ENCODE measurements at regions of chr15 and their contacts with region 1.

Region 1: GRCh38 chr15:95129574-95129973 is 898.2 kb downstream of the MCTP2 start:
- DNase-seq: peak; percentile 16
- H3K4me3 ChIP-seq: no peak overlapping the region
- H3K27ac ChIP-seq: no peak overlapping the region
- H3K4me1 ChIP-seq: peaks cover 28% of the 10 kb centered on the region
- H3K27me3 ChIP-seq: no peaks in the 10 kb centered on the region
- CTCF ChIP-seq: no peak
- POLR2A ChIP-seq: no peak

Region 2: DNA sequence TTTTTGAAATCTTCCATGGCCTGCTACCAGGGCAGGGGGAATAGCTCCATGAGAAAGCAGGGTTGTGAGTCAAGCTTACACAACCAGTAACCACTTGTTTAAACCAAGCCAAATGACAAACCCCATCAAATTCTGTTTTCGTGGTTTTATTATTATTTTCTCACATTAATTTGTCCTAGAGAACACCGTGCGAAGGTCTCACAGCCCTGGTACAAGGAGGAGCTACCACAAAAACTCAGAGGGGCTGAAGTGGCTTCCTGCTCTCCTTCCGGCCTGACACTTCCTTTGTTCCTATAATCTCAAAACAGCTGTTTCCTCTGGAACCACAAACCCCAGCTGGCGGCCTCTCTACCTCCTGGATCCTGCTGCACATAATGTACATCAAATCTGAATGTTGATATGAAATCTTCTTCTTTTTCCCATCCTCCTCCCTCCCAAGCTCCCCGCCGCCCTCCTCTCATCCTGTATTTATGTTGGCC is 522.4 kb before region 1 on chr15:
- CTCF ChIA-PET with region 1: no interaction called
- POLR2A ChIA-PET with region 1: no interaction called
- dilution Hi-C with region 1: no loop called
- intact Hi-C with region 1: loop called (anchors 1 kb)
- DNase-seq: peak; percentile 96
- H3K4me3 ChIP-seq: no peak overlapping the region
- H3K27ac ChIP-seq: peak overlapping the region; percentile 97
- H3K4me1 ChIP-seq: peaks cover 40% of the 10 kb centered on the region
- H3K27me3 ChIP-seq: no peaks in the 10 kb centered on the region
- CTCF ChIP-seq: no peak
- POLR2A ChIP-seq: peak; percentile 75

Region 3: GRCh38 chr15:95175914-95176658 is 46.5 kb after region 1 on chr15:
- CTCF ChIA-PET with region 1: interaction called, 4 read pairs
- POLR2A ChIA-PET with region 1: no interaction called
- dilution Hi-C with region 1: no loop called
- intact Hi-C with region 1: loop called (anchors 1 kb)
- DNase-seq: peak; percentile 94
- H3K4me3 ChIP-seq: no peak overlapping the region
- H3K27ac ChIP-seq: peak overlapping the region; percentile 95
- H3K4me1 ChIP-seq: peaks cover 30% of the 10 kb centered on the region
- H3K27me3 ChIP-seq: no peaks in the 10 kb centered on the region
- CTCF ChIP-seq: no peak
- POLR2A ChIP-seq: no peak

Region 4: DNA sequence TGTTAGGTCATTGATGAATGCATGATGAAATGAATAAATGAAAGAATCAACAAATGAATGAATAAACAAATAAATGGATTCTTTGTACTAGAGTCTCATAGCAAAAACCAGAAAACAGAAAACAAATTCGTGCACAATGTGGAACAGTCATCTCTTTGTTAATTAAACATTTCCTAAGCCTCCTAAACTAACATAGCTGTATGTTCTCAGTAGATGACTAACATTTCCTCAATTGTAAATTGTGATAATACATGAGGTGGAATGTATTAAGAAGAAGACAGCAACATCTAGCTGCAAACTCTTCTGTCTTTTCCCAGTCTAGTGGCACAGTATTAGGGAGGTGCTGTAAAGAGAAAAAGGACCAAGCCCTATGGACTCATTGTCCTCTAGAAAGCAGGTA is 122.8 kb after region 1 on chr15:
- CTCF ChIA-PET with region 1: interaction called, 3 read pairs
- POLR2A ChIA-PET with region 1: no interaction called
- dilution Hi-C with region 1: no loop called
- intact Hi-C with region 1: loop called (anchors 2 kb)
- DNase-seq: peak; percentile 82
- H3K4me3 ChIP-seq: no peak overlapping the region
- H3K27ac ChIP-seq: peak overlapping the region; percentile 59
- H3K4me1 ChIP-seq: peaks cover 32% of the 10 kb centered on the region
- H3K27me3 ChIP-seq: no peaks in the 10 kb centered on the region
- CTCF ChIP-seq: no peak
- POLR2A ChIP-seq: no peak

Region 5: DNA sequence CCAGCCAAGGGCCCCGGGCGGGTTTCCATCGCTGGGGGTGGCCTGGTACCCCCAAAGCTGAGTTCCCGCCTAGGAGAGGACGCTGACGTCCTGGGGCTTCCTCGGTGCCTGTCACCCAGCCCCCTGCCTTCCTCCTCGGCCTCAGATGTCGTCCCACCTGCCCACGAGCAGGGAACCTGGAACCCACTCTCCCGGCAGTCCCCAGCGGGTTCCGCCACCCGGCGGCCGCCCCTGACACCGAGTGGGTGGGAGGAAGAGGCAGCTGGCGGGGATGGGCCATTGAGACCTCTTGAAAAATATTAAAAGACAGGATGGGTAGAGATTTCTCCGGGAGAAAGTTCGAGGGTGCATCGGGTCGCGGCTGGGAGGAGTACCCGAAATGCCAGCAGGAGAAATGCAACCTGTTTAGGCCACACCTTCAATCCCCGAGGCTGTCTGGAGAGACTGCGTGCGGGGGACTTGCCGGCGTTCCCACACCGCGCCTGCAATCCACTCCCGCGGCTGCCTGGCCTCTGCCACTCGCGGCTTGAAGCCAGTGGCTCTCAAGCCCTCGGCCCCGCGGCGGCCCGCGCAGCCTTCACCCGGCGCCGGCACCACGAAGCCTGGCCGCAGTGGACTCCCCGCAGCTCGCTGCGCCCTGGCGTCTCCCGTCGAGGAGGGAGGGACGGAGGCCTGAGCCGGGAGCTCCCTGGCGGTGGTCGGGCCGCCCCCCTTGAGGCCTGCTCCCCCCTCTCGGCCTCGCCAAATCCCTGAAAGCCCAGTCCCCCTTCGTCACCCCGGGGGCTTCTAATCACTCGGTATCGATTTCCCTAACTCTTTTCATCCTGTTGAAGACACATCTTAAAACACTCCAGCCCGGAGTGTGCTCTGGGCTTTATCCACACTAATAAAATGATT is 1192.3 kb after region 1 on chr15:
- CTCF ChIA-PET with region 1: no interaction called
- POLR2A ChIA-PET with region 1: no interaction called
- dilution Hi-C with region 1: no loop called
- intact Hi-C with region 1: loop called (anchors 5 kb)
- DNase-seq: peak; percentile 67
- H3K4me3 ChIP-seq: peak overlapping the region; percentile 18 to 89 (median 29)
- H3K27ac ChIP-seq: peak overlapping the region; percentile 85
- H3K4me1 ChIP-seq: peaks cover 74% of the 10 kb centered on the region
- H3K27me3 ChIP-seq: no peaks in the 10 kb centered on the region
- CTCF ChIP-seq: peak; percentile 7 to 27
- POLR2A ChIP-seq: no peak

Measured in endothelial cell of umbilical vein (primary cell).